IMR-90 (cell line): ENCODE measurements at regions of chr6 and their contacts with region 1.

Region 1: DNA sequence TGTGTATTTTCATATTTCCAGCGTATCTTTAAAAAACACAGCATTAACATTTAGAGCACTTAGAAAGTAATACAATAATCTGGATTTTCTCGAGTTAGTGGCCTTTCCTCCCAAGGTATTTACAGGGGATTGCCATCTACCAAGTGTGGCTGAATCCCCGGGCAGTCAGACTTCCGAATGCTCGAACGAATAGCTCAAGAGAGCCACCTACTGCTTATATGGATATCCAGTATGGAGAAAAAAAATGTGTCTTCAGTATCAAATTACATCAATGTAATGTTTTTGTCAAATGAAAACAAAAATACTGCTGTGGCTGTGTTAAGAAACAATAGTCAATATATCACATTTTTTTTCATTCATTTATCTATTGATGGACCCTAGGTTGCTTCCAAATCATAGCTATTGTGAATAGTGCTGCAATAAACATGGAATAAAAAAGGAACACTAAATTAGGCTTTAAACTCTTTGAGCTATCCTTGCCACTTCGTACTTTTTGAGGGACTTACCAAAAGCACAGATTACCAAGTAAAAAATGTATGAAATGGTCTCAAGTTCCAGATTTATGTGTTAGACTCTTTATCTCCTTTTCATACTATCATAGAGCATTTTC is 654.5 kb upstream of the PTCHD4 start:
- DNase-seq: peak; percentile 76
- ATAC-seq: peak; percentile 87
- H3K4me3 ChIP-seq: no peak overlapping the region
- H3K27ac ChIP-seq: no peak overlapping the region
- H3K4me1 ChIP-seq: peaks cover 2% of the 10 kb centered on the region
- H3K27me3 ChIP-seq: no peaks in the 10 kb centered on the region
- CTCF ChIP-seq: peak; percentile 78
- POLR2A ChIP-seq: no peak
- RAD21 ChIP-seq: peak; percentile 77

Region 2: GRCh38 chr6:47631269-47631772 is 1134.1 kb before region 1 on chr6:
- CTCF ChIA-PET with region 1: no interaction called
- POLR2A ChIA-PET with region 1: no interaction called
- dilution Hi-C with region 1: no loop called
- in situ Hi-C with region 1: no loop called
- intact Hi-C with region 1: loop called (anchors 2 kb)
- DNase-seq: peak; percentile 45
- ATAC-seq: peak; percentile 47
- H3K4me3 ChIP-seq: no peak overlapping the region
- H3K27ac ChIP-seq: no peak overlapping the region
- H3K4me1 ChIP-seq: no peaks in the 10 kb centered on the region
- H3K27me3 ChIP-seq: no peaks in the 10 kb centered on the region
- CTCF ChIP-seq: peak; percentile 66
- POLR2A ChIP-seq: no peak
- RAD21 ChIP-seq: peak; percentile 66

Region 3: DNA sequence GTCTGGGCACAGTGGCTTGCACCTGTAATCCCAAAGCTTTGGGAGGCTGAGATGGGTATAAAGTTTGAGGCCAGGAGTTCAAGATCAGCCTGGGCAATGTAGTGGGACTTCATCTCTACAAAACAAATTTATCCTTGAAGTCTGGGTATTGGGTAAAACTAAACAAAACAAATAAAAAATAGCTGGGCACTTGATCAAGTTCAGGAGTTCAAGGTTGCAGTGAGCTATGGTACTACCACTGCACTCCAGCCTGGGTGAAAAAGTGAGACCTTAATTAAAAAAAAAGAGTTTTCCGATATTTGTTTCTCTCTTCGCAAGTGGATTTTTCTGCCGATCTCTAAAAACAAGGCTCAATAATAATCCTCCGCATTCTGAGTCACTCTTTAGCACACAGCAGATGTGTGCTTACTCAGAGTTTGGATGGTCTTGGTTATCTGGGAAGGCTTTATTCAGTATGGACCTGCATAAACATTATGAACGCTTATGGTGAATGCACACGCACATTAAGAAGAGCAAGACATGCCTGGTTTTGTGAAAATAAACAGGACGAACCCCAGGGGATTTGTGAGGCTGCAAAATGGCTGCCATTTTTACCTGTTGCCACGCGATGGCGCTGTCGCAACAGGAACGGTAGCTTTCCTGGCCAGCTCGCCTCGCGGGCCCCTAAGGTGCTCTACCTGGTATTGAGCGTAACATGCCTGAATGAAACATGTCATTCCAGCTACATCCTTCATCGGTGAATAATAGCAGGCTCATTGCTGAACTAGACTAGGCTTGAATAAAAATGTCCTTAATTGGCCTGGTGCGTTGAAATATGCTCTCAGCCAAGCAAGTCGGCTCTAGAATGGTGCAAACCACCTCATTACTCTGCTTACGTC is 977.6 kb before region 1 on chr6:
- CTCF ChIA-PET with region 1: interaction called, 7 read pairs
- POLR2A ChIA-PET with region 1: no interaction called
- dilution Hi-C with region 1: no loop called
- in situ Hi-C with region 1: loop called (anchors 10 kb)
- intact Hi-C with region 1: loop called (anchors 1 kb)
- DNase-seq: peak; percentile 51
- ATAC-seq: peak; percentile 84
- H3K4me3 ChIP-seq: no peak overlapping the region
- H3K27ac ChIP-seq: no peak overlapping the region
- H3K4me1 ChIP-seq: no peaks in the 10 kb centered on the region; the same call in 1 of the 2 replicates
- H3K27me3 ChIP-seq: peaks cover 6% of the 10 kb centered on the region; the same call in 1 of the 2 replicates
- CTCF ChIP-seq: peak; percentile 85
- POLR2A ChIP-seq: no peak
- RAD21 ChIP-seq: peak; percentile 92

Region 4: DNA sequence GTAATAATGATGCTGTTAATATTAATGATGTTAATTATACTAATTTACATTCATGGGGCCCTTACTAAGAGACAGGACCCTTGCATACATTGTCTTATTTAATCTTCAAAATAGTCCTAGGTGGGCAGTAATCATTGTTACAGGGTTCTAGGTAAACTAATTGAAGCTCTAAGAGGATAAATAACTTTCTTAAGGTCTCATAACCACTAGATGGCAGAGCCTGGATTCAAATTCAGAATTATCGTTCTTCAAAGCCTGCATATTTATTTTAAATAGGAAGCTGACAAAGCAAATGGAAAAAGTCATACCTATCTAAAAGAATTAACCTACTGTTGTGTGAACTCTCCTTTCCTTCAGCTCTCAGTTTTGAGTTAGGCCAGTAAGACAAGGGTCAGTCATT is 678.0 kb before region 1 on chr6:
- CTCF ChIA-PET with region 1: interaction called, 8 read pairs
- POLR2A ChIA-PET with region 1: no interaction called
- dilution Hi-C with region 1: no loop called
- in situ Hi-C with region 1: no loop called
- intact Hi-C with region 1: loop called (anchors 1 kb)
- DNase-seq: peak; percentile 23
- ATAC-seq: peak; percentile 35; the same call in 1 of the 2 replicates
- H3K4me3 ChIP-seq: no peak overlapping the region
- H3K27ac ChIP-seq: no peak overlapping the region
- H3K4me1 ChIP-seq: no peaks in the 10 kb centered on the region
- H3K27me3 ChIP-seq: no peaks in the 10 kb centered on the region
- CTCF ChIP-seq: peak; percentile 33
- POLR2A ChIP-seq: no peak
- RAD21 ChIP-seq: peak; percentile 47

Region 5: GRCh38 chr6:48476257-48476656 is 289.2 kb before region 1 on chr6:
- CTCF ChIA-PET with region 1: no interaction called
- POLR2A ChIA-PET with region 1: no interaction called
- dilution Hi-C with region 1: no loop called
- in situ Hi-C with region 1: no loop called
- intact Hi-C with region 1: loop called (anchors 5 kb)
- DNase-seq: peak; percentile 30
- ATAC-seq: peak; percentile 71
- H3K4me3 ChIP-seq: no peak overlapping the region
- H3K27ac ChIP-seq: no peak overlapping the region
- H3K4me1 ChIP-seq: no peaks in the 10 kb centered on the region
- H3K27me3 ChIP-seq: no peaks in the 10 kb centered on the region
- CTCF ChIP-seq: peak; percentile 57
- POLR2A ChIP-seq: no peak
- RAD21 ChIP-seq: peak; percentile 66

Region 6: GRCh38 chr6:49409951-49410542 is 644.6 kb after region 1 on chr6:
- CTCF ChIA-PET with region 1: no interaction called
- POLR2A ChIA-PET with region 1: no interaction called
- dilution Hi-C with region 1: no loop called
- in situ Hi-C with region 1: loop called (anchors 25 kb)
- intact Hi-C with region 1: loop called (anchors 2 kb)
- DNase-seq: peak; percentile 61
- ATAC-seq: peak; percentile 97
- H3K4me3 ChIP-seq: no peak overlapping the region
- H3K27ac ChIP-seq: no peak overlapping the region
- H3K4me1 ChIP-seq: no peaks in the 10 kb centered on the region
- H3K27me3 ChIP-seq: no peaks in the 10 kb centered on the region
- CTCF ChIP-seq: peak; percentile 84
- POLR2A ChIP-seq: no peak
- RAD21 ChIP-seq: peak; percentile 80